ENCODE measurements at regions of chr11 and their contacts with region 1.

Region 1: DNA sequence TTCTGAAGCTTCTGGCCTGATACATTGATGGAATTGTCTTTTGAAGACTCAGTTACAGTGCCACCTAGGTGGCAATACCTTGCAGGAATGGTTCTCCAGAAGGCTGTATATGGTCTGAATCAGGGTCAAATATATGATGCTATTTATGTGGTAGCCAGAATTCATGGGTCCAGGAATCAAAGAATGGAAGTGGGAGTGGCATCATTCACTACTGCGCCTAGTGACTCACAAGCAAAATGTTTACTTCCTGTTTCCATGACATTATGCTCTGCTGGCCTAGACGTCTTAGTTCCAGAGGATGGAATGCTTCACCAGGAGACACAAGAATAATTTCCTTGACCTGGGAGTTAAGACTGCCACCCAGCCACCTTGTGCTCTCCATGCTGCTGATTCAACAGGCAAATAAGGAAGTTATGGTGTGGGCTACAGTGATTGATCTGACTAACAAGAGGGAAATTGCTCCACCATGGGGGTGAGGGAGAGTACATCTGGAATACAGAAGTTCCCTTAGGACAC is 491.8 kb downstream of the ETS1 start:
- DNase-seq: peak; percentile 59 to 78
- H3K4me3 ChIP-seq: no peak overlapping the region
- H3K27ac ChIP-seq: no peak overlapping the region
- H3K4me1 ChIP-seq: no peaks in the 10 kb centered on the region
- H3K27me3 ChIP-seq: no peaks in the 10 kb centered on the region
- CTCF ChIP-seq: no peak

Region 2: DNA sequence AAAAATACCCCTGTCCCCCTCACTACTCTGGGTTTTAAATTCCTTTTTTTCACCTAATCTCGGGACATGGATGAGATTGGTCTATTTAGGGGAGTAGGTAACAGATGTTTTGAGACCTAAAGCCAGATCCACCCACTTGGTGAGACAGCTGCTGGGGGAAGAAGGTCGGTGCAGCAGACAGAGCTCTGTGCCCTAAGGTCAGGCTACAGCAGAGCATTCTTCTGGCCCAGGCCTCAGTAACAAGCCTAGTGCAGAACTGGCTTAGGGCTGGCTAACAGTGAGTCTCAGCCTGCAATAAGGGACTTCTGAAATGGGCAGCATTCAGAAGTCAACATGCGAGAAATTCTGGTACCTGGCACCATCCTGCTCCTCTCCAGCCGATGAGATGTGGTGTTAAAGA is 650.0 kb before region 1 on chr11:
- CTCF ChIA-PET with region 1: no interaction called
- POLR2A ChIA-PET with region 1: no interaction called
- intact Hi-C with region 1: no loop called
- DNase-seq: no peak
- H3K4me3 ChIP-seq: no peak overlapping the region
- H3K27ac ChIP-seq: no peak overlapping the region
- H3K4me1 ChIP-seq: no peaks in the 10 kb centered on the region
- H3K27me3 ChIP-seq: peaks cover 6% of the 10 kb centered on the region; the same call in 1 of the 2 replicates
- CTCF ChIP-seq: no peak

Region 3: GRCh38 chr11:128052912-128053641 is 42.4 kb before region 1 on chr11:
- CTCF ChIA-PET with region 1: no interaction called
- POLR2A ChIA-PET with region 1: no interaction called
- intact Hi-C with region 1: loop called (anchors 5 kb)
- DNase-seq: peak in 1 of 2 experiments; percentile 9
- H3K4me3 ChIP-seq: no peak overlapping the region
- H3K27ac ChIP-seq: no peak overlapping the region
- H3K4me1 ChIP-seq: no peaks in the 10 kb centered on the region; the same call in 1 of the 2 replicates
- H3K27me3 ChIP-seq: no peaks in the 10 kb centered on the region
- CTCF ChIP-seq: no peak

Region 4: DNA sequence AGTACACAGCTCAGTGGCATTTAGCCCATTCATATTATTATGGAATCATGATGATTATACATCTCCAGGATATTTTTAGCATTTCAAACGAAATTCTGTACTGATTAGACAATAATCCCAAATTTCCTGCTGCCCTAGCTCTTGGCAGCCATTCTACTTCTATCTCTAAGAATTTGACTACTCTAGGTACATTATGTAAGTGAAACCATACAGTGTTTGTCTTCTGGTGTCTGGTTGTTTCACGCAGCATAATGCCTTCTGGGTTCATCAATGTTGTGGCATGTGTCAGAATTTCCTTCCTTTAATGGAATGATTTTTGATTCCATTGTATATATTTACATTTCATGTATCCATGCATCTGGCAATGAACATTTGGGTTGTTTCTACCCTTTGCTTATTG is 25.9 kb before region 1 on chr11:
- CTCF ChIA-PET with region 1: no interaction called
- POLR2A ChIA-PET with region 1: no interaction called
- intact Hi-C with region 1: no loop called
- DNase-seq: no peak
- H3K4me3 ChIP-seq: no peak overlapping the region
- H3K27ac ChIP-seq: no peak overlapping the region
- H3K4me1 ChIP-seq: no peaks in the 10 kb centered on the region
- H3K27me3 ChIP-seq: no peaks in the 10 kb centered on the region
- CTCF ChIP-seq: no peak